Endothelial cell of umbilical vein (primary cell): ENCODE measurements at regions of chr19 and their contacts with region 1.

Region 1: DNA sequence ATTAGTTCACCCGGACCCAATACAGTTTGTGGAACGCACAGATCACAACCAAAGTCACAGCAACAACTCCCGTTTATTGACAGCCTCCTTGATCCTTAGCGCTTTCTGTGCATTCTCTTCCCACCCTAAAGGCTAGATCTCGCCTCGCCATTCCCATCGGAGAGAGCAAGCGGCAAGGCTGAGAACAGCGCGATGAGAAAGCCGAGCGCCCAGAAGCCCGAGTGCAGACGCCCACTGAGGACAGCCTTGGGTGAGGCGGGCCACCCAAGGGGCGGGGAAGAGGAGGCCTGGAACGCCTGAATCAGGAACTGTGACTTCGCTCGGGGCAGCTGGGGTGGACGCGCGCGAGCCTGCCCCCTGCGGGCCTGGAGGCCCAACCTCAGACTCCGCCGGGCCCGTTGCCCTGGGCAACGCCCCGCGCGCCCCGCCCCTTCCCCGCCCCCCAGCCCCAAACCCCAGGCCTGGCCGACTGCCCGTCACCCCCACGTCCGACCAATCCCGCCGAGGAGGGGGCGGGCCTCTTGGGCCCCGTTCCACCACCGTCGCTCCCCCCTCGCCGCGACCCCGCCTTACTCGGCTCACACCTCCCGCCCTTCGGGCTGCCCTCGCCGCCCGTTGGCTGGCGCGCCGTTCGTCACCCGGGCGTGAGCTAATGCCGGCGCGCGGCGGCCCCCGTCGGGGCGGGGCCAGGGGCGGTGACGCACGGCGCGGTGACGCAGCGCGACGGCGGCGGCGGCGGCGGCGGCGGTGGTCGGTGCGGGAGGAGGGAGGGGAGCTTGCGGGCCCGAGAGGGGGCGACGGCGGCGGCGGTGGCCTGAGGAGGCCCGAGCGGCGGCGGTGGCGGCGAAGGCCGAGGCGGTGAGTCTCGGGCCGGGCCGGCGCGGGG is at the start of gene SAMD4B:
- DNase-seq: peak; percentile 97
- H3K4me3 ChIP-seq: peak within 1 kb of the TSS; percentile 65 to 88 (median 73)
- H3K27ac ChIP-seq: peak within 1 kb of the TSS; percentile 56
- H3K4me1 ChIP-seq: peaks cover 13% of the 10 kb centered on the region
- H3K27me3 ChIP-seq: no peaks in the 10 kb centered on the region
- CTCF ChIP-seq: peak; percentile 53 to 84
- POLR2A ChIP-seq: peak; percentile 95
- total RNA-seq, gene SAMD4B: 82.1 and 87.7 TPM in 2 replicates

Region 2: DNA sequence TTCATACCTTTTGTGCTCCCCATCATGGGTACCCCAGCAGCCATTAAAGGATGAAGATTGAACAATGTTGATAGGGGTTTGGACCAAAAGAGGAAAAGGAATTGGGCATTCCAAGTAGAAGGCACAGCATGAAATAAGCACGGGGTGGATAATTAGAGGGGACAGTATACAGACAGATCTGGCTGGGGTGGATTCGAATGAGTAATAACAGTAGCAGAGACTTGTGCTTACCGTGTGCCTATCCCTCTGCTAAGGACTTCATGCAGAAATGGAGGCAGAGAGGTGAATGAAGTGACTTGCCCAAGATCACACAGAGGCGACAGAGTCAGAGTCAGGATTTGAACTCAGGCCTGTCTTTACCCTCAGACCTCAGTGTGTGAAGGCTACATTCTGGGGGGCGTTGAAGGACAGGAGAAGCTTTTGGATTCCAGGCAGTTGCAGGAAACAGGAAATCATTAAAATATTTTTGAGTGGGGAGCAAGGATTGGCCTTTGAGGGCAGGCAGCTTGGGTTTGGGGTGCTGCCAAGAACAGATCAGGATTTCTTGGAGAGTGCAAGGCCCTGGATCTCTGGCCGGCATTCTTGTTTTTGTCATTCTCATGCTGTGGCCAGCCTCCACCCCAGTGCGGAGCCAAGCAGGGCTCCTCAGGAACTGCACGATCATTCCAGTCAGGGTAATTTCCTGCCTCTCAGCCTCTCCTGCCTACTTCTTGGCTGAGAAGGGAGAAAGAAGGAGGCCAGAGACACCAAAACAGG is 30.3 kb after region 1 on chr19:
- CTCF ChIA-PET with region 1: interaction called, 3 read pairs
- POLR2A ChIA-PET with region 1: no interaction called
- dilution Hi-C with region 1: no loop called
- intact Hi-C with region 1: loop called (anchors 2 kb)
- DNase-seq: peak; percentile 75
- H3K4me3 ChIP-seq: no peak overlapping the region
- H3K27ac ChIP-seq: peak overlapping the region; percentile 85
- H3K4me1 ChIP-seq: peaks cover 18% of the 10 kb centered on the region
- H3K27me3 ChIP-seq: no peaks in the 10 kb centered on the region
- CTCF ChIP-seq: no peak
- POLR2A ChIP-seq: peak; percentile 24

Region 3: GRCh38 chr19:39390755-39391592 is 49.0 kb after region 1 on chr19 and contains the starts of genes MED29 and PAF1:
- CTCF ChIA-PET with region 1: no interaction called
- POLR2A ChIA-PET with region 1: interaction called, 4 read pairs
- dilution Hi-C with region 1: no loop called
- intact Hi-C with region 1: loop called (anchors 1 kb)
- DNase-seq: peak; percentile 100
- H3K4me3 ChIP-seq: peak within 1 kb of the TSS; percentile 60 to 84 (median 83)
- H3K27ac ChIP-seq: peak within 1 kb of the TSS; percentile 83
- H3K4me1 ChIP-seq: peaks cover 9% of the 10 kb centered on the region
- H3K27me3 ChIP-seq: no peaks in the 10 kb centered on the region
- CTCF ChIP-seq: peak in 1 of 2 donors; percentile 7
- POLR2A ChIP-seq: peak; percentile 98
- total RNA-seq, gene MED29: 24.7 and 25.5 TPM in 2 replicates
- total RNA-seq, gene PAF1: 53.6 and 55.1 TPM in 2 replicates

Region 4: GRCh38 chr19:39435499-39436349 is 93.8 kb after region 1 on chr19 and contains the start of gene RPS16:
- CTCF ChIA-PET with region 1: interaction called, 4 read pairs
- POLR2A ChIA-PET with region 1: no interaction called
- dilution Hi-C with region 1: no loop called
- intact Hi-C with region 1: loop called (anchors 5 kb)
- DNase-seq: peak; percentile 98
- H3K4me3 ChIP-seq: peak within 1 kb of the TSS; percentile 96
- H3K27ac ChIP-seq: peak within 1 kb of the TSS; percentile 96
- H3K4me1 ChIP-seq: peaks cover 26% of the 10 kb centered on the region
- H3K27me3 ChIP-seq: no peaks in the 10 kb centered on the region
- CTCF ChIP-seq: no peak
- POLR2A ChIP-seq: peak; percentile 96
- total RNA-seq, gene RPS16: 1,735 and 1,768 TPM in 2 replicates